KBM-7 (cell line): ENCODE measurements at regions of chr2 and their contacts with region 1.

Region 1: DNA sequence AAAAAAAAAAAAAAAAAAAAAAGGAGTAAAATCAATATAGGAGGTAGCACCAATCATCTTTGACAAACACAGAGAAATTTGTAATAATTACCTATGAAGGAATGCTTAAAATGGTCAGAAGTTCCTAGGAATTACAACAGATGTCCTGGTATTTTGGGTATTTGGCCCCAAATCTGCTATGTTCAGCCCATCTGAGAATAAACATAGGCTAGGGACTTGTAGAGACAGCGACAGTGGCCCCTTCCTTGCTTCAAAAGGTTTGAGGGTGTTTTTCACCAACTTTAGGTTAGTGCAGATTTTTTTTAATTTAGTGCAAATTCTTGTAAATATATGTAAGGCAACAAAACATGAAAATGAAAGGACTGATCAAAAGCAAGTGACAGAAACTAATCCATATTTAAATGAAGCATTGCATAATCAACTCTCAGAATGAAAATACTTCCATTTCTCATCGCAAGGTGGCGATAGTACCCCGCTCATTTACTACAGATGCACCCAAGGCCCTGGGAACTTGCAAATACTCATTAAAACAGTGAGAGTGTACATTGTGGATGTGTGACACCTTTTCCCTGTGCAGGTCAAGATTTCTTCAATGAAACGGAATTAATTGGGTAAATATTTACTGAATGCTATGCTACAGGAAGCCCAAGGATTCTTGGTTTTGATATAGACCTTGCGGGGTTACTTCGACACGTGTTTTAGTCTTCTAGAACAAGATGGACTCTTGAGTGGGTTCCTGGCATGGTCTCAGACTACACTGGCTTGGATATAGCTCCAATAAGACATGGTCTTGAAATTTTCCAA is 44.6 kb downstream of the FAM124B start:
- DNase-seq: peak; percentile 85

Region 2: GRCh38 chr2:224764565-224765236 is 407.4 kb after region 1 on chr2:
- in situ Hi-C with region 1: loop called (anchors 25 kb)
- DNase-seq: no peak